IMR-90 (cell line): ENCODE measurements at regions of chr12 and their contacts with region 1.

Region 1: GRCh38 chr12:26701604-26702215 is 131.3 kb downstream of the ITPR2 start:
- DNase-seq: peak; percentile 70
- ATAC-seq: peak; percentile 54
- H3K4me3 ChIP-seq: no peak overlapping the region
- H3K27ac ChIP-seq: no peak overlapping the region
- H3K4me1 ChIP-seq: peaks cover 7% of the 10 kb centered on the region
- H3K27me3 ChIP-seq: no peaks in the 10 kb centered on the region
- CTCF ChIP-seq: peak; percentile 74
- POLR2A ChIP-seq: no peak
- RAD21 ChIP-seq: peak; percentile 73

Region 2: GRCh38 chr12:26097046-26097878 is 604.4 kb before region 1 on chr12:
- CTCF ChIA-PET with region 1: no interaction called
- POLR2A ChIA-PET with region 1: no interaction called
- dilution Hi-C with region 1: no loop called
- in situ Hi-C with region 1: no loop called
- intact Hi-C with region 1: loop called (anchors 5 kb)
- DNase-seq: peak; percentile 76
- ATAC-seq: peak; percentile 99
- H3K4me3 ChIP-seq: no peak overlapping the region
- H3K27ac ChIP-seq: no peak overlapping the region
- H3K4me1 ChIP-seq: no peaks in the 10 kb centered on the region
- H3K27me3 ChIP-seq: no peaks in the 10 kb centered on the region
- CTCF ChIP-seq: peak; percentile 94
- POLR2A ChIP-seq: 0 out of 2 replicates have a peak, but pooled peaks have one; percentile 41
- RAD21 ChIP-seq: peak; percentile 94

Region 3: DNA sequence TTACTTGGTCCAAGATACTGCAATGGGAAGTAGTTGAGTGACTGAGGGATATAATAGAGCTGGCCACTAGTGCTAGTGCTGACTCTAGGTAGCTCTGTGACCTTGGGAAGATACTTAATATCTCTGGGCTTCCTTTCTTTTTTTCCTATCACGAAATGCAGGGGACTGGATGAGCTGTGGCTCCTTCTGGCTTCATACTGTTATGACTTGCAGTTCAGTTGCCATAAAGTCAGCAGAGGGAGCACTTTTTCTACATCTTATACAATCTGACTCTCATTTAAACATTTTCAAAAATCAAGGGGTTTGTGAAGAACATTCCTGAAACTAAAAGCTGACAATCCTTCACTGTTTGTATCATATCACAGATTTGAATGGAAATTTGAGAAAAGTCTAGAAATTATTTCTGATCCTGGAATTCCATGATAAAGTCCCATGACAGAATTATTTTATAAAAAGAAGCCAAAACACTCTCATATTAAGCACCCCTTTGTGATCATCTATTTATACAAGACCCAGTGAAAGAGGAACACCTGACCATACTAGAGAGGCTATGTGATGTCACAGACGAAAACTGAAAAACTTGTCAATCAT is 582.2 kb before region 1 on chr12:
- CTCF ChIA-PET with region 1: interaction called, 3 read pairs
- POLR2A ChIA-PET with region 1: no interaction called
- dilution Hi-C with region 1: no loop called
- in situ Hi-C with region 1: no loop called
- intact Hi-C with region 1: loop called (anchors 2 kb)
- DNase-seq: peak; percentile 78
- ATAC-seq: peak; percentile 25; the same call in 1 of the 2 replicates
- H3K4me3 ChIP-seq: no peak overlapping the region
- H3K27ac ChIP-seq: no peak overlapping the region
- H3K4me1 ChIP-seq: no peaks in the 10 kb centered on the region
- H3K27me3 ChIP-seq: peaks cover 3% of the 10 kb centered on the region
- CTCF ChIP-seq: peak; percentile 69
- POLR2A ChIP-seq: no peak
- RAD21 ChIP-seq: peak; percentile 71

Region 4: DNA sequence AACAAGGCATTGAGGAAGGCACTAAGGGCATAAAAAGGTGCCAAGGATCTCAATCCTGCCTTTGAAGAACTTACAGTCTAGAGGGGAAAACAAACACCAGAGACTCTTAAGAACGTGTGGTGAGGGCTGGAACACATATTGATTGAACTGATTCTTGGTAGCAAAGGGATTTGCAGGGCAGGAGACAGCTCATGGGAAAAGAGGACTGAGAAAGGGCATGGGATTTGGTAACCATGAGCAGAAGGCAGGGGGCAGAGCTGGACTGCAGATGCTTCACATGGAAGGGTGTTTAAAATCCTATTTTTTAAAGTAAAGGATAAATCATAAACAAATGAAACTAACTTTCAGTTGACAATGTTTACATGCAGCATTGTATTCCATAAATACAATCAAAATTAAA is 71.8 kb before region 1 on chr12:
- CTCF ChIA-PET with region 1: interaction called, 10 read pairs
- POLR2A ChIA-PET with region 1: no interaction called
- dilution Hi-C with region 1: no loop called
- in situ Hi-C with region 1: no loop called
- intact Hi-C with region 1: loop called (anchors 1 kb)
- DNase-seq: peak; percentile 70
- ATAC-seq: peak; percentile 71
- H3K4me3 ChIP-seq: no peak overlapping the region
- H3K27ac ChIP-seq: no peak overlapping the region; the same call in 1 of the 2 replicates
- H3K4me1 ChIP-seq: peaks cover 11% of the 10 kb centered on the region
- H3K27me3 ChIP-seq: no peaks in the 10 kb centered on the region
- CTCF ChIP-seq: peak; percentile 75
- POLR2A ChIP-seq: no peak
- RAD21 ChIP-seq: peak; percentile 77

Region 5: DNA sequence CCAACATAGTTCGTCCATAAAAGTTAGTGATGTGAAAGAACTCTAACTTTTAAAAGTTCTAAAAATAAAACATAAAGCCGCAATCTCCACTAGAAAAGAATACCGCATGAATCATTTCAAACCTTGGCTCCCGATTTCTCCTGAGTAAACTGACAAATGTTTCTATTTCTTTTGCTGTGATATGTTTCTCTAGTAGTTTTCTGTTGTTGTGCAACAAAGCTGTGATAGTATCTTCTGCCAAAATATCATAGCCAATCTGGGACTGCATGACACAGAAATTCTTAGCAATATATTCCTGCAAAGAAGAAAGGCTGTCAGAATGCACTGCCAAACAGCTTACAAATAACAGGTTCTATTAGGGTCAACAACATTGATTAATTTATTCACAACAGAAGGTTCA is 42.7 kb before region 1 on chr12:
- CTCF ChIA-PET with region 1: no interaction called
- POLR2A ChIA-PET with region 1: no interaction called
- dilution Hi-C with region 1: no loop called
- in situ Hi-C with region 1: no loop called
- intact Hi-C with region 1: loop called (anchors 5 kb)
- DNase-seq: peak; percentile 81
- ATAC-seq: peak; percentile 51; the same call in 1 of the 2 replicates
- H3K4me3 ChIP-seq: no peak overlapping the region
- H3K27ac ChIP-seq: no peak overlapping the region
- H3K4me1 ChIP-seq: no peaks in the 10 kb centered on the region
- H3K27me3 ChIP-seq: no peaks in the 10 kb centered on the region
- CTCF ChIP-seq: no peak
- POLR2A ChIP-seq: no peak
- RAD21 ChIP-seq: no peak

Region 6: GRCh38 chr12:26791301-26791791 is 89.6 kb after region 1 on chr12:
- CTCF ChIA-PET with region 1: no interaction called
- POLR2A ChIA-PET with region 1: no interaction called
- dilution Hi-C with region 1: no loop called
- in situ Hi-C with region 1: no loop called
- intact Hi-C with region 1: no loop called
- DNase-seq: peak; percentile 43
- ATAC-seq: peak; percentile 10; the same call in 1 of the 2 replicates
- H3K4me3 ChIP-seq: no peak overlapping the region
- H3K27ac ChIP-seq: no peak overlapping the region
- H3K4me1 ChIP-seq: peaks cover 22% of the 10 kb centered on the region
- H3K27me3 ChIP-seq: no peaks in the 10 kb centered on the region
- CTCF ChIP-seq: no peak
- POLR2A ChIP-seq: no peak
- RAD21 ChIP-seq: no peak